ENCODE measurements at regions of chr5 and their contacts with region 1.

Region 1: GRCh38 chr5:178075840-178076548 is 37.3 kb upstream of the N4BP3 start:
- DNase-seq: peak; percentile 71
- ATAC-seq: peak; percentile 94
- H3K4me3 Mint-ChIP-seq: peak overlapping the region; percentile 12
- H3K27ac Mint-ChIP-seq: no peak overlapping the region
- H3K4me1 Mint-ChIP-seq: peaks cover 6% of the 10 kb centered on the region
- H3K27me3 Mint-ChIP-seq: peaks cover 9% of the 10 kb centered on the region
- CTCF ChIP-seq: peak; percentile 95

Region 2: DNA sequence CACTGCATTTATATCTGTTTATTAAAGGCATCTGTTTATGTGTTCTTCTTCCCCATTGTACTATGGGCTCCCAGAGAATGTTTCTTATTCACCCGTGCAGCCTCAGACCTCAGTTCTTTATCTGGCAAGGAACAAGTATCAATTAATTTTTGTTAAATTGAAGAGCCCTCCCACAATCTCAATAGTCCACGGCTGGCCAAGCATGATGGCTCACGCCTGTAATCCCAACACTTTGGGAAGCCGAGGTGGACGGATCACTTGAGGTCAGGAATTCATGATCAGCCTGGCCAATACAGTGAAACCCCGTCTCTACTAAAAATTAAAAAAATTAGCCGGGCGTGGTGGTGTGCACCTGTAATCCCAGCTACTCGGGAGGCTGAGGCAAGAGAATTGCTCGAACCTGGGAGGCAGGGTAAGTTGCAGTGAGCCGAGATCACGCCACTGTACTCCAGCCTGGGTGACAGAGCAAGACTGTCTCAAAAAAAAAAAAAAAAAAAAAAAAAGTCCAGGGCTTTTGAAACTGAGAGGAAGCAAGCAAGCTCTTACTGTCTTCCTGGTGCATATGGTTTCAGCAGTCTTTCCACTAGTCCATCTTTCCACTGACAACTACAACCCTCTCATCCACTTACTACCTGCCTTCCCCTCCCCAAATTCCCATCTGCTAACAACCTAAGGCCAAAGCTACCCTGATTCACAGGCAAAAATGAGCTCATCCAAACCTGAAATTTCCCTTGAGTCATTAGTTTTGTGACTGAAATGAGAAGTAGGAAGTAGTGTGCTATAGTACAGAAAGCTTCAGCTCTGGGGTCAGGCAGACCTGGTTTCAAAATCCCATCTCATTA is 1174.5 kb before region 1 on chr5:
- CTCF ChIA-PET with region 1: no interaction called
- POLR2A ChIA-PET with region 1: no interaction called
- intact Hi-C with region 1: no loop called
- DNase-seq: no peak
- ATAC-seq: peak; percentile 72
- H3K4me3 Mint-ChIP-seq: no peak overlapping the region
- H3K27ac Mint-ChIP-seq: peak overlapping the region; percentile 75
- H3K4me1 Mint-ChIP-seq: peaks cover 13% of the 10 kb centered on the region
- H3K27me3 Mint-ChIP-seq: no peaks in the 10 kb centered on the region
- CTCF ChIP-seq: no peak

Region 3: DNA sequence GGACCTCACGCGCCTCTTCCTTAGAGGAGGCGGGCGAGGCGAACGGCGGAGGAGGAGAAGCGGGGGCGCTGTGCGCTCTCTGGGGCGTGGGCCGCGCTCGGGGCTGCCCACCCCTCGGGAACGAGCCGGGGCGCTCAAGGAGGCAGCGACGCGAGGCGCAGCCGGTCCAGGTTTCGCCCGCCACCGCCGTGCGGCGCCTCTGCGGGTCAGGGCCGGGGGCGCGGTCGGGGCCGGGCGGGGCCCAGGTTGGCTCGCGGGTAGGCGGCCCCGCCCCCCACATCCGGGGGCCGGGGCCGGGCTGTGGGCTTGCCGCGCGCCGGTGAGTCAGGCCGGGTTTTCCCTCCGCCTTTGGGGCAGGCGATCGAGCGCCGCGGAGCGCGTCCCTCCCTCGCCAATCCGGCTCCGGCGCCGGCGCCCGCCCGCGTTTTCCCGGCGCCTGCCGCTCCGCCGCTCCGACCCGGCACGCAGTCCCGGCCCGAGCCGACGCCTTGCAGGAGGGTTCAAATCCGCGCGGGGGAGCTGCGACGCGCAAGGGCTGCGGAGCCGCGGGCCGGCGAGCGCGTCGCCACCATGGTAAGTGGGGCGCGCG is 37.3 kb after region 1 on chr5 and contains the start of gene N4BP3:
- CTCF ChIA-PET with region 1: interaction called, 9 read pairs
- POLR2A ChIA-PET with region 1: interaction called, 15 read pairs
- intact Hi-C with region 1: loop called (anchors 1 kb)
- DNase-seq: peak; percentile 92
- ATAC-seq: peak; percentile 70
- H3K4me3 Mint-ChIP-seq: peak within 1 kb of the TSS; percentile 98
- H3K27ac Mint-ChIP-seq: peak within 1 kb of the TSS; percentile 94
- H3K4me1 Mint-ChIP-seq: peaks cover 65% of the 10 kb centered on the region
- H3K27me3 Mint-ChIP-seq: no peaks in the 10 kb centered on the region
- CTCF ChIP-seq: no peak
- total RNA-seq, gene N4BP3: 17.4 and 18.1 TPM in 2 replicates

Region 4: DNA sequence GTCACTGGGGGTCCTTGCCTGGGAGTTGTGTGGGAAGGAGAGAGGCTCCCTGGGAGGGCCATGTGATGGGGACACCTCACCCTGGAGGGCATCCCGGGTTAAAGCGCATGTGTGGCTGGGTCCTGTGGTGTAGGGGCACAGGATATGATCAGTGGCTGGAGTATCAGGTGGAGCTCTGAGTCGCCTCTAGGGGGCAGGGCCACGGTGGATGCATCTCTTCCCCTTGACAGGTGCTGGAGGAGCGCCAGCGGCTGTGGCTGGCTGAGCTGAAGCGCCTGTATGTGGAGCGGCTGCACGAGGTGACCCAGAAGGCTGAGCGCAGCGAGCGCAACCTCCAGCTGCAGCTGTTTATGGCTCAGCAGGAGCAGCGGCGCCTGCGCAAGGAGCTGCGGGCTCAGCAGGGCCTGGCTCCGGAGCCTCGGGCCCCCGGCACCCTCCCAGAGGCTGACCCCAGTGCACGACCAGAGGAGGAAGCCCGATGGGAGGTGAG is 44.9 kb after region 1 on chr5:
- CTCF ChIA-PET with region 1: interaction called, 46 read pairs
- POLR2A ChIA-PET with region 1: interaction called, 15 read pairs
- intact Hi-C with region 1: no loop called
- DNase-seq: peak; percentile 56
- ATAC-seq: peak; percentile 67
- H3K4me3 Mint-ChIP-seq: peak overlapping the region; percentile 55
- H3K27ac Mint-ChIP-seq: peak overlapping the region; percentile 65
- H3K4me1 Mint-ChIP-seq: peaks cover 66% of the 10 kb centered on the region
- H3K27me3 Mint-ChIP-seq: no peaks in the 10 kb centered on the region
- CTCF ChIP-seq: peak; percentile 25

Region 5: GRCh38 chr5:178130604-178131485 is 54.9 kb after region 1 on chr5 and contains the start of gene RMND5B:
- CTCF ChIA-PET with region 1: interaction called, 10 read pairs
- POLR2A ChIA-PET with region 1: interaction called, 5 read pairs
- intact Hi-C with region 1: no loop called
- DNase-seq: peak; percentile 86
- ATAC-seq: peak; percentile 89
- H3K4me3 Mint-ChIP-seq: peak within 1 kb of the TSS; percentile 85
- H3K27ac Mint-ChIP-seq: peak within 1 kb of the TSS; percentile 74
- H3K4me1 Mint-ChIP-seq: peaks cover 21% of the 10 kb centered on the region
- H3K27me3 Mint-ChIP-seq: no peaks in the 10 kb centered on the region
- CTCF ChIP-seq: no peak
- total RNA-seq, gene RMND5B: 42.4 and 57.2 TPM in 2 replicates

Region 6: GRCh38 chr5:178146020-178146820 is 70.2 kb after region 1 on chr5:
- CTCF ChIA-PET with region 1: interaction called, 190 read pairs
- POLR2A ChIA-PET with region 1: interaction called, 10 read pairs
- intact Hi-C with region 1: loop called (anchors 1 kb)
- DNase-seq: peak; percentile 65
- ATAC-seq: peak; percentile 89
- H3K4me3 Mint-ChIP-seq: no peak overlapping the region
- H3K27ac Mint-ChIP-seq: no peak overlapping the region
- H3K4me1 Mint-ChIP-seq: peaks cover 4% of the 10 kb centered on the region
- H3K27me3 Mint-ChIP-seq: no peaks in the 10 kb centered on the region
- CTCF ChIP-seq: peak; percentile 26

Region 7: DNA sequence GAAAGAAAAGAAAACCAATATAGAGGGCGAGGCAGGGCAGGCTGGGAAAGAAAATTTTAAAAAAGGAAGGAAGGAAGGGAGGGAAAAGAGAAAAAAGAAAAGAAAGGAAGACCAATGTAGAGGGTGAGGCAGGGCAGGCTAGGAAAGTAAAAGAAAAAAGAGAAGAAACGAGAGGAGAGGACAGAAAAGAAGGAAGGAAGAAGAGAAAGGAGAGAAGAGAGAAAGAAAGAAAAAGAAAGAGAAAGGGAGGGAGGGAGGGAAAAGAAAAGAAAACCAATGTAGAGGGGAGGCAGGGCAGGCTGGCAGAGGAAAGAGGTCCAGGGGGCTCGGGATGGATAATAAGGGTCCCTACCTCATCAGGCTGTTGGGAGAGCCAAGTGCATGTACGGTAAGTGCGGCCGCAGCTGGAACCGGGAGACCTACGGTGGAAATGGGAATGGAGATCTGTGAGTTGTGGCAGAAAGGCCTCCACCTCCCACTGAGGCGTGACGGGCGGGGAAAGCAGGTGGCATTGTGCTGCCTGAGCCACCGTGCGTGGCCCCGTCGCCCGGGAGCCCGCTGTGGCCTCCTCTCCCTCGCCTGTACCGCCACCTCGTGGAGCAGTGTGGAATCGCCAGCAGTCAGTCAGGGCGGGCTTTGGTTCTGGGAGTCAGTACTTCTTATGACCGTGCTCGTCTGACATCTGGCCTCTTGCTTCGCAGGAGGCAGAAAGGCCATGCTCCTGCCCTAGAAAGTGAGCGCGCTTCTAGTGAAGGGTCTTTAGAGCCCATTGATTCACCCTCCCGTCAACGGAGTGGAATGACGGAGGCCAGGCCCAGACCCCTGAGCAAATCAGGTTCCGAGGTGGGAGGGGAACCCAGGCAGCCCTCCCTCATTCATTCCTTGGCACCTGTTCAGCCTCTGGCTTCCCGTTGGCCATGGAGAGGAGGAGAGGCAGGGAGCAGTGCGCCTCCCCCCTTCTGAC is 88.1 kb after region 1 on chr5:
- CTCF ChIA-PET with region 1: interaction called, 26 read pairs
- POLR2A ChIA-PET with region 1: interaction called, 9 read pairs
- intact Hi-C with region 1: loop called (anchors 1 kb)
- DNase-seq: peak; percentile 92
- ATAC-seq: peak; percentile 100
- H3K4me3 Mint-ChIP-seq: peak overlapping the region; percentile 46
- H3K27ac Mint-ChIP-seq: peak overlapping the region; percentile 24
- H3K4me1 Mint-ChIP-seq: peaks cover 15% of the 10 kb centered on the region
- H3K27me3 Mint-ChIP-seq: peaks cover 8% of the 10 kb centered on the region
- CTCF ChIP-seq: peak; percentile 68

Region 8: DNA sequence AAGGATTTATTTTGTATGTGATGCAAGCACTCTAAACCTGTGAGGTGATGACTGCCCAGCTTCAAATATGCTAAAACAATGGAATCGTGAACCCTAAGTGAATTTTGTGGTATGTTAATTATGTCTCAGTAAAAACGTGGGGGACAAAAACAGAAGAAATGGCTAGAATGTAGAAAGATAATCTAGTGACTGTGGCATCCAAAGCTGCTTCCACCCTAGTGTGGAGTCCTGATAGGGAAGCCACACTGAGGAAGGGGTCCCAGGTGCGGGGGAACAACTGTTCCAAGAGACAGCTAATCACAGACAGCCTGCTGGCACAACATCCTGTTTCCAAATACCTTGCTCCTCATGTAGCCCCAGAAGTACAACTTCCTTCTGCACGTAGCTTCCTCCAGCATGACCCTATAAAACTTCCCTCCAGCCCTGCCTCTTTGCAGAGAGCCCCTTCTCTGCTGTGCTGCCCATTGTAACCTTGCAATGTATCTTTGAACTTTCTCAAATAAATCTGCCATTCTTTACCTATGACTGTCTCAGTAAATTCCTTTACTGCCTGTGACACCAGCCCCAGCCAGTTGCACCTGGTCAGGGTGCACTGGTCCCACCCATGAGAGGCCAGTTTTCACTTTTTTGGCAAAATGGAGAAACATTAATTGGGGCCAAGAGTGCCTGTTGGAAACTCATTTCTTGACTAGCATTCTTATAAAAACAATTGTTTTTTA is 106.3 kb after region 1 on chr5:
- CTCF ChIA-PET with region 1: no interaction called
- POLR2A ChIA-PET with region 1: no interaction called
- intact Hi-C with region 1: no loop called
- DNase-seq: no peak
- ATAC-seq: no peak
- H3K4me3 Mint-ChIP-seq: no peak overlapping the region
- H3K27ac Mint-ChIP-seq: no peak overlapping the region
- H3K4me1 Mint-ChIP-seq: no peaks in the 10 kb centered on the region
- H3K27me3 Mint-ChIP-seq: peaks cover 13% of the 10 kb centered on the region
- CTCF ChIP-seq: no peak

Region 9: DNA sequence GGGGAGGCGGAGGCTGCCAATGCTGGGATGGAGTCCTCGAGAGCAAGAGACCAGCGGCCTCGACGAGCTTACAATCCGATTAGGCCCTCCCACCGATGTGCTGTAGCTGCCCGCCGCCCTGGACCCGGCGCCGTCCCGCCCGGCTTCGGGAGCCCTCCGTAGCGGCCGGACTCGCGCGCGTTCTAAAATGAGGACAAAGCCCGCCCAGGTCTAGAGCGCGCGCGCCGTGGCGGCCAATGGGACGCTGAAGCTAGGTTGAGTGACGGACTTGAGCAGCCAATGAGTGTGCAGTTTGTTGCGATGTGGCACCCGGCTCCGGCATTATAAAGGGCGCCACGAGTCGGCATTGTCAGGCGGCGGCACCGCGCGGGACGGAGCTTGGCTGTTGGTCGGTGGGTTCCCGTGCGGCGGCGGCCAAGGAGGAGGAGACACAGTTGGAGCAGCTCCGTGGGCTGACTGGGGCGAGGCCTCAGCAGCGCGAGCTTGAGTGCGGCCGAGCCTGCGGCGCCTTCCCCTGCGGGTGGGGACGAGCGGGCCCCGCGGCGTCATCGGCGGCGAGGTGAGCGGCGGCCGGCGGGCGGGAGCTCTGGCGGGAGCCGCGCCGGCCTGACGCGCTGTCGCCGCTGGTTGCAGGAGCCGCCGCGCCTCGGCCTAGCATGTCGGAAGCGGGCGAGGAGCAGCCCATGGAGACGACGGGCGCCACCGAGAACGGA is 128.3 kb after region 1 on chr5 and contains the start of gene HNRNPAB:
- CTCF ChIA-PET with region 1: interaction called, 3 read pairs
- POLR2A ChIA-PET with region 1: interaction called, 12 read pairs
- intact Hi-C with region 1: no loop called
- DNase-seq: peak; percentile 95
- ATAC-seq: peak; percentile 80
- H3K4me3 Mint-ChIP-seq: peak within 1 kb of the TSS; percentile 95
- H3K27ac Mint-ChIP-seq: peak within 1 kb of the TSS; percentile 95
- H3K4me1 Mint-ChIP-seq: peaks cover 28% of the 10 kb centered on the region
- H3K27me3 Mint-ChIP-seq: no peaks in the 10 kb centered on the region
- CTCF ChIP-seq: no peak
- total RNA-seq, gene HNRNPAB: 118 and 120 TPM in 2 replicates